Activated T-helper 2 cell treated with anti-CD3 and anti-CD28 coated beads, Interferon-gamma antibody, Interleukin-2, Interleukin-4, amounts not matched to agents 10 μg/mL and 5 μg/mL and 100 μg/mL, durations not matched to agents 14 hours and 24 hours and 36 hours (primary cell): ENCODE measurements at regions of chr6 and their contacts with region 1.

Region 1: GRCh38 chr6:44096612-44097011 is 30.6 kb downstream of the MRPL14 start:
- DNase-seq: peak; percentile 56
- H3K4me3 Mint-ChIP-seq: no peak overlapping the region
- H3K27ac Mint-ChIP-seq: no peak overlapping the region
- H3K4me1 Mint-ChIP-seq: no peaks in the 10 kb centered on the region
- H3K27me3 Mint-ChIP-seq: no peaks in the 10 kb centered on the region

Region 2: GRCh38 chr6:44116641-44117382 is 20.2 kb after region 1 on chr6:
- intact Hi-C with region 1: no loop called
- DNase-seq: no peak
- H3K4me3 Mint-ChIP-seq: no peak overlapping the region
- H3K27ac Mint-ChIP-seq: peak overlapping the region; percentile 17
- H3K4me1 Mint-ChIP-seq: peaks cover 32% of the 10 kb centered on the region
- H3K27me3 Mint-ChIP-seq: no peaks in the 10 kb centered on the region

Region 3: DNA sequence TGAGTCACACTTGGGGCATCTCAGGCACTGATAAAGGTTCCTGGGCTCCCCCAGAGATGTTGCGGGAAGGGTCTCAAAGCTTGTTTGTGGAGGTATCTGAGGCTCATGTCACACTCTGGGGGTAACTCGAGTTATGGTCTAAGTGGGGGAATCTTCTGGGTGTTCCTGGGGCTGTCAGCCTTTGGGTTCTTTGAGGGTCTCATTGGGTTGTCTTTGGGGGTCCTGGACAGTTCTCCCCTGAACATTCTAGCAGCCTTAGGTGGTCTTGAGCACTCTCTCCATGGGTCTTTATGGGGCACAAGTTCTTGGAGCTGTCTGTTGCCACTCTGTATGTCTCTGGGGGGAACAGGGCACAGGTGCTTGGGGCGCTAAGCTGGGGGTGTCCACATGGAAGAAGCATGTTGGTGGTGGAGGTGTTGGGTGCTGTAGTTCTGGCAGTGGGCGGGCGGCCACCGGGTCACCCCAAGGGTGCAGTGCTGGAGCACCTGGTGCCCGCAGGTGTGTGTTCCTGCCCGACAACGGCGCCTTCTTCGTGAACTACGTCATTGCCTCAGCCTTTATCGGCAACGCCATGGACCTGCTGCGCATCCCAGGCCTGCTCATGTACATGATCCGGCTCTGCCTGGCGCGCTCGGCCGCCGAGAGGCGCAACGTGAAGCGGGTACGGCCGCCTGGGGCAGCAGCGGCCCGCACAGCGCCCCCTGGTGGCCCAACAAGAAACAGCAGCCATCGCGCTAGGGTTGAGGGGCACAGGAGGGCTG is 54.9 kb after region 1 on chr6:
- intact Hi-C with region 1: loop called (anchors 1 kb)
- DNase-seq: peak; percentile 73
- H3K4me3 Mint-ChIP-seq: no peak overlapping the region
- H3K27ac Mint-ChIP-seq: no peak overlapping the region
- H3K4me1 Mint-ChIP-seq: peaks cover 17% of the 10 kb centered on the region
- H3K27me3 Mint-ChIP-seq: no peaks in the 10 kb centered on the region

Region 4: DNA sequence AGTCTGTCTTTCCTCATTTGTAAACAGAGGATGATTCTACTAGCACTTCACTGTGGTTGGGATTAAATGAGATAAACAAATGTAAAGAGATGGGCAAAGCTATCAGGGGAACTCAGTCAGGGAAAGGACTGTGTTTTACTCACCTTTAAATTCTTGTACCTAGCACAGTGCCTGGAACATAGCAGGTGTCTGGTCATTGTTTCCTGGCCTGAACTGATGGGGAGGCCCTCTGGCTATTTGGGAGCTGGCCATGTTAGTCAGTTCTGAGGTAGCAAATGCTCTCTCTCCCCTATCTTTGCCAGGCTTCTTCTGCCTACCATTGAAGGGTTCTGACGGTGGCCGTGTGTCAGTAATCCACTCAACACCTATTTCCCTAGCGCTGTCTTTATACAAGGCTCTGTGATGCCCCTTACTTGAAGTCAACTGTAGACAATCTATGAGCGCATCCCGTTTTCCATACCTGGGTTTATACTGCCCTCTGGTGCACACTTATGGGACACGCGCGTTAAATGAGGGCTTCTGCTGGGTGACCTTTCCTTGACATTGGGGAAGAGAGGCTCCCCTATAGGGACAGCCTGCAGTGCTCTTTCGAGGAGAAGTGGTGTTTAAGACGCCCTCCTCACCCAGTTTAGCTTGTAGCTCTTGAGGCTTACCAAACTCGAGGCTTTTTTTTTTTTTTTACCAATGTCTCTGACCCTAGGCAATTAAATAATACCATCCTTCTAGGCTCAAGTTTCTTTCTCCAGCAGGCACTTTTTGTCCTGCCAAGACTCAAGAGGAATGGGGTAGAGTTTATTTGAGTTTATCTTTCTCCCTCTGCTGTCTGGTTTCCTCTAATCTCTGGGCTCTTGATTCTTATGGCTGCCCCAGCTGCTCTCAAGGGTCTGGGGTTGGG is 241.9 kb after region 1 on chr6:
- intact Hi-C with region 1: loop called (anchors 10 kb)
- DNase-seq: peak; percentile 59
- H3K4me3 Mint-ChIP-seq: no peak overlapping the region
- H3K27ac Mint-ChIP-seq: no peak overlapping the region
- H3K4me1 Mint-ChIP-seq: peaks cover 4% of the 10 kb centered on the region
- H3K27me3 Mint-ChIP-seq: peaks cover 24% of the 10 kb centered on the region